Tibial artery (tissue), 4 donors: ENCODE measurements at regions of chr5 and their contacts with region 1.

Region 1: GRCh38 chr5:55601204-55601618 is 66.4 kb upstream of the PLPP1 start:
- DNase-seq: peak; percentile 92 to 95
- H3K4me3 ChIP-seq: peak overlapping the region in 1 of 2 donors; percentile 8
- H3K27ac ChIP-seq: peak overlapping the region; percentile 75 to 82
- H3K4me1 ChIP-seq: peaks cover 0 to 91% (median 67%) of the 10 kb centered on the region in 4 donors
- H3K27me3 ChIP-seq: no peaks in the 10 kb centered on the region
- CTCF ChIP-seq: no peak

Region 2: DNA sequence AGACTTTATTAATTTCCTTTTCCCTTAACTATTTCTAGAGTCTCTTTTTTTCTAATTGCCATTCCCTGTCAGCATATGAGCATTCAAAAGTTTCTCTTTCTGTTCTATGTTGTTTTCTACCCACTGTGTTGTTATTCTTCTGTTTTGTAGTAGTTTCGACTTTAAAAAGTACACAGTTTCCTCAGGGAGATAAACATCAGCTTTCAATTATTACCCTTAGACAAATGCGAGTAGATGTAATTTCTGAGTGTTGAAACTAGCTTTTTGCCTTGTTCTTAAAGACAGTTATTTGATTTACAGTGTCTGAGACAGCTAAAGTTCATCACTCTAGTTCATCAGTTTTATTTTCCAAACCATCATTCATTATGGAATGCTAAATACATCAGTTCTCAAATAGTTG is 273.9 kb before region 1 on chr5:
- intact Hi-C with region 1: no loop called
- DNase-seq: no peak
- H3K4me3 ChIP-seq: no peak overlapping the region
- H3K27ac ChIP-seq: peak overlapping the region in 1 of 2 donors; percentile 44
- H3K4me1 ChIP-seq: peaks cover 0 to 42% (median 0%) of the 10 kb centered on the region in 4 donors
- H3K27me3 ChIP-seq: no peaks in the 10 kb centered on the region
- CTCF ChIP-seq: no peak

Region 3: GRCh38 chr5:55564721-55565120 is 36.5 kb before region 1 on chr5:
- intact Hi-C with region 1: loop called (anchors 5 kb)
- DNase-seq: no peak
- H3K4me3 ChIP-seq: no peak overlapping the region
- H3K27ac ChIP-seq: peak overlapping the region in 1 of 2 donors; percentile 16
- H3K4me1 ChIP-seq: peaks cover 0 to 18% (median 5%) of the 10 kb centered on the region in 4 donors
- H3K27me3 ChIP-seq: no peaks in the 10 kb centered on the region
- CTCF ChIP-seq: no peak

Region 4: GRCh38 chr5:55650386-55650785 is 49.2 kb after region 1 on chr5:
- intact Hi-C with region 1: no loop called
- DNase-seq: no peak
- H3K4me3 ChIP-seq: no peak overlapping the region
- H3K27ac ChIP-seq: no peak overlapping the region
- H3K4me1 ChIP-seq: no peaks in the 10 kb centered on the region
- H3K27me3 ChIP-seq: no peaks in the 10 kb centered on the region
- CTCF ChIP-seq: no peak